B cell (primary cell): ENCODE measurements at regions of chr7 and their contacts with region 1.

Region 1: GRCh38 chr7:4973728-4974198 is 14.8 kb upstream of the MMD2 start:
- DNase-seq: peak; percentile 96
- ATAC-seq: peak; percentile 94
- H3K4me3 ChIP-seq: peak overlapping the region in 4 of 5 experiments; percentile 44 to 84 (median 67)
- H3K4me3 Mint-ChIP-seq: peak overlapping the region; percentile 100
- H3K27ac ChIP-seq: peak overlapping the region; percentile 14 to 72
- H3K27ac Mint-ChIP-seq: peak overlapping the region; percentile 100
- H3K4me1 ChIP-seq: peaks cover 2 to 3% of the 10 kb centered on the region in 2 donors
- H3K4me1 Mint-ChIP-seq: peaks cover 20% of the 10 kb centered on the region
- H3K27me3 ChIP-seq: no peaks in the 10 kb centered on the region
- H3K27me3 Mint-ChIP-seq: no peaks in the 10 kb centered on the region
- CTCF ChIP-seq: peak; percentile 91

Region 2: GRCh38 chr7:4797858-4798705 is 175.7 kb before region 1 on chr7:
- CTCF ChIA-PET with region 1: interaction called, 5 read pairs
- POLR2A ChIA-PET with region 1: no interaction called
- intact Hi-C with region 1: loop called (anchors 10 kb)
- DNase-seq: peak; percentile 73
- ATAC-seq: peak; percentile 91
- H3K4me3 ChIP-seq: no peak overlapping the region
- H3K4me3 Mint-ChIP-seq: no peak overlapping the region
- H3K27ac ChIP-seq: no peak overlapping the region
- H3K27ac Mint-ChIP-seq: no peak overlapping the region
- H3K4me1 ChIP-seq: peaks cover 0 to under 1% of the 10 kb centered on the region in 2 donors
- H3K4me1 Mint-ChIP-seq: no peaks in the 10 kb centered on the region
- H3K27me3 ChIP-seq: no peaks in the 10 kb centered on the region
- H3K27me3 Mint-ChIP-seq: no peaks in the 10 kb centered on the region
- CTCF ChIP-seq: peak; percentile 97

Region 3: GRCh38 chr7:4928445-4928844 is 45.3 kb before region 1 on chr7:
- CTCF ChIA-PET with region 1: no interaction called
- POLR2A ChIA-PET with region 1: no interaction called
- intact Hi-C with region 1: no loop called
- DNase-seq: no peak
- ATAC-seq: no peak
- H3K4me3 ChIP-seq: no peak overlapping the region
- H3K4me3 Mint-ChIP-seq: no peak overlapping the region
- H3K27ac ChIP-seq: no peak overlapping the region
- H3K27ac Mint-ChIP-seq: no peak overlapping the region
- H3K4me1 ChIP-seq: no peaks in the 10 kb centered on the region
- H3K4me1 Mint-ChIP-seq: no peaks in the 10 kb centered on the region
- H3K27me3 ChIP-seq: peaks cover 0 to 2% (median 0%) of the 10 kb centered on the region in 4 experiments
- H3K27me3 Mint-ChIP-seq: peaks cover 9% of the 10 kb centered on the region
- CTCF ChIP-seq: no peak

Region 4: DNA sequence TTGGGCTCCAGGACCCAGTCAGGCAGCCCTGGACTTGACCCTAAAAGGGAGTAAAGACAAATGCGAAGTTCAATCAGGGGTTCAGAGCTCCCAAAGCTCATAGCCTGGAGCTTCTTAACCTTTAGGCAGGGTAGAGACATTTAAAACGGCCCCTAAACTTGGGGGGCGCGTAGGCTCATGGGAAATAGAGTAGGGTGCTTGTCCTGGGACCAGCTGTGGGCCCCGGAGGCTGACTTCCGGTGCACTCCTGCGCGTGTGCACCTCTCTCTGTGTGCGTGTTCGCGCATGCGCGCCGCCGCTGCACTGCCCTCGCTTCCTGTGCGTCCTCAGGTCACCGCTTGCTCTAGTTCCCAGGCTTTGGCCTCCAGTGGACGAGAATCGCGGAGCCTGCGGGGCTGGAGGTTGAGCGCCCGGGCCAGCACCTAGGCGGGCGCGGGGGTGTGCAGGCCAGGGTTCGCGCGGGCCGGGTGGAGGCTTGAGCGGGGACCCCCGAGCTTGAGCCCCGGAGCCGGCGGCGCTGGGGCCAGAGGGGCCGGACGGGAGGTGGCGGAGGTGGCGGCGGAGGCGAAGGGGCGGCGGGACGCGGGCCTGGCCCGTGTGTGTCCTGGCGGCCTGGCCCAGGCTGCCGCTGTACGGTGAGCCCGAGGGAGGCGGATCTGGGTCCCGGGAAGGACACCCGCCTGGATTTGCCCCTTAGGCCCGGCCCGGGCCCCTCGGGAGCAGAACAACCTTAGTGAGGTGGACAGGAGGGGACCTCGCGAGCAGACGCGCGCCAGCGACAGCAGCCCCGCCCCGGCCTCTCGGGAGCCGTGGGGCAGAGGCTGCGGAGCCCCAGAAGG is 72.0 kb after region 1 on chr7 and contains the start of gene RBAK:
- CTCF ChIA-PET with region 1: interaction called, 10 read pairs
- POLR2A ChIA-PET with region 1: interaction called, 3 read pairs
- intact Hi-C with region 1: loop called (anchors 2 kb)
- DNase-seq: peak; percentile 94
- ATAC-seq: peak; percentile 99
- H3K4me3 ChIP-seq: peak within 1 kb of the TSS in 4 of 5 experiments; percentile 61 to 87 (median 81)
- H3K4me3 Mint-ChIP-seq: peak within 1 kb of the TSS; percentile 95
- H3K27ac ChIP-seq: peak within 1 kb of the TSS; percentile 53 to 85
- H3K27ac Mint-ChIP-seq: peak within 1 kb of the TSS; percentile 94
- H3K4me1 ChIP-seq: peaks cover 0 to 16% of the 10 kb centered on the region in 2 donors
- H3K4me1 Mint-ChIP-seq: peaks cover 27% of the 10 kb centered on the region
- H3K27me3 ChIP-seq: no peaks in the 10 kb centered on the region
- H3K27me3 Mint-ChIP-seq: no peaks in the 10 kb centered on the region
- CTCF ChIP-seq: no peak
- total RNA-seq, gene RBAK: 18.2 and 20.3 TPM in 2 replicates

Region 5: DNA sequence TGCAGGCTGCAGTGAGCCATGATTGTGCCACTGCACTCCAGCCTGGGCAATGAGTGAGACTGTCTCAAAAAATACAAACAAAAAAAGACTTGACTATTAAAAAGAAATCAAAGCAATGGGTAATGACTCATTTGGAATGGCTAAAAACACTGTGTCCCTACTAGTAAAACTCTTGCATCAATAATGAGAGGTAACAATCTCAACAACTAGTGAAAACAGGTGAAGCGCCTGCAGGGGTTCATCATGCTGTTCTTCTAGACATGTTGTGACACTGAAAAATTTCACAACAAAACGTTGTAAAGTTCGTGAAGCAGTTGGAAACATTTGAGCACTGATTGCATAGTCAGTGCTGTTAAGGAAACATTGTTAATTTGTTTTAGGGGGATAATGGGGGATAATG is 282.1 kb after region 1 on chr7:
- CTCF ChIA-PET with region 1: no interaction called
- POLR2A ChIA-PET with region 1: no interaction called
- intact Hi-C with region 1: no loop called
- DNase-seq: no peak
- ATAC-seq: no peak
- H3K4me3 ChIP-seq: no peak overlapping the region
- H3K4me3 Mint-ChIP-seq: no peak overlapping the region
- H3K27ac ChIP-seq: no peak overlapping the region
- H3K27ac Mint-ChIP-seq: no peak overlapping the region
- H3K4me1 ChIP-seq: no peaks in the 10 kb centered on the region
- H3K4me1 Mint-ChIP-seq: no peaks in the 10 kb centered on the region
- H3K27me3 ChIP-seq: no peaks in the 10 kb centered on the region
- H3K27me3 Mint-ChIP-seq: peaks cover 6% of the 10 kb centered on the region
- CTCF ChIP-seq: no peak

Region 6: DNA sequence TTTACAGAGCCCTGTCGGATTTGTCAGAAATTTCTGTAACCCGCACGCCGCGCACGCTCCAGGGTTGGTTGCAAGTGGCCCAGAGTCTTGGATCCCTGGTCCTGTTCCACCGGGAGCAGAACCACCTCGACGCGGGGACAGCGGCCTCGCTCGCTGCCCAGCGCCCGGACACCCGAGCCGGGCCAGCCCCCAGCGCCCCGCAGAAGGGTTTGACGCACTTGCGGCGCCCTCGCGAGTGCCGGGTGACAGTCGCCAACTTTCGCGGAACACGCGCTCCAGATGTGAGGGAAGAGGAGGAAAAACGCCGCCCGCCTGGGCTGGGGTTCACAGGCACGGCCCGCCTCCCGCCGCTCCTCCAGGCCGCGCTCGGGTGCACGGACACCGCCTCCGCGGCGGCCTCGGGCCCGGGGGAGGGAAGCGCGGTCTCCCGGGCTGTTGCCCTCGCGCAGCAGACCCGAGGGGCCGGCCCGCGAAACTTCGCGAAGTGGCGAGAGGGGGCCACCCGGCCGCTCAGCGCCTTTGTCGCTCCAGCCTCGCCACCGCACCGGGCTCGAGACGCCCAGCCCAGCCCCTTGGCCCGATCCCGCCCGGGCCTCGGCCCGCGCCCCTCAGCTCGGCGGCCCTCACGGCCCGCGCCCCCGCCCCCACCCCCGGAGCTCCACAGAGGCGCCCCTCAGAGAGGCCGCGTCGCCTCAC is 807.2 kb after region 1 on chr7:
- CTCF ChIA-PET with region 1: no interaction called
- POLR2A ChIA-PET with region 1: no interaction called
- intact Hi-C with region 1: loop called (anchors 5 kb)
- DNase-seq: no peak
- ATAC-seq: peak; percentile 34
- H3K4me3 ChIP-seq: peak overlapping the region in 4 of 5 experiments; percentile 44 to 87 (median 64)
- H3K4me3 Mint-ChIP-seq: peak overlapping the region; percentile 88
- H3K27ac ChIP-seq: peak overlapping the region; percentile 36 to 83
- H3K27ac Mint-ChIP-seq: peak overlapping the region; percentile 91
- H3K4me1 ChIP-seq: peaks cover 9 to 29% of the 10 kb centered on the region in 2 donors
- H3K4me1 Mint-ChIP-seq: peaks cover 42% of the 10 kb centered on the region
- H3K27me3 ChIP-seq: no peaks in the 10 kb centered on the region
- H3K27me3 Mint-ChIP-seq: no peaks in the 10 kb centered on the region
- CTCF ChIP-seq: no peak